HepG2 (cell line): ENCODE measurements at regions of chr4 and their contacts with region 1.

Region 1: DNA sequence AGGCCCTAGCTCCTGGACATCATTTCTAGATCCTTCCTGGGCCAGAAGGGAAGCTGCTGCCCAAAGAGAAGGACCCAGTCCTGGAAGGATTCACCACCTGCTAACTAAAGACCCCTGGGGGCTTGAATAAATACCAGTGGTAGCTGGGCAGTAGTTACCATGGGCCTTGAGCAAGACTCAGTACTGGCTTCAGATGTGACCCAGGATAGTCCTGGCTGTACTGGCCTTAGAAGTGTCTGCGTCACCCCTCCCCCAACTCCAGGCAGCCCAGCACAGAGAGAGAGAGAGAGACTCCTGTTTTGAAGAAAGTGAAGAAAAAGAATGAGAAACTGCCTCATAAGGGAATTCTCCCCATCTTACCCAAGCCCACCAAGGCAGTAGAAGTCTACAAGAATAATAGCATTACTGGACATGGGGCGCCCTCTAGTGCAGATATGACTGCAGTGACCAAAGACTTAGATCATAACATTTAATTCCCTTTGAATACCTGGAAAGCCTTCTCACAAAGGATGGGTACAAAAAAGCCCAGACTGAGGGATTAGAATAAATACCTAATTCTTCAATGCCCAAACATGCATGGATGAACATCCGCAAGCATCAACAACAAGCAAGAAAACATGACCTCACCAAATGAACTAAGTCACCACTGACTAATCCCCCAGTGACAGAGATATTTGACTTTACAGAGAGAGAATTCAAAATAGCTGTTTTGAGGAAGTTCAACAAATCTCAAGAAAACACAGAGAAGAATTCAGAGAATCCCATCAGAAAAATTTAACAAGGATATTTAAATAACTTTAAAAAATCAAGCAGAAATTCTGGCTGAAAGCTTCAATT is 171.8 kb downstream of the HNRNPD start:
- DNase-seq: peak; percentile 49
- ATAC-seq: peak; percentile 90
- H3K4me3 ChIP-seq: no peak overlapping the region
- H3K27ac ChIP-seq: no peak overlapping the region
- H3K4me1 ChIP-seq: no peaks in the 10 kb centered on the region
- H3K27me3 ChIP-seq: no peaks in the 10 kb centered on the region
- CTCF ChIP-seq: peak; percentile 83
- EP300 ChIP-seq: no peak
- POLR2A ChIP-seq: no peak
- RAD21 ChIP-seq: peak; percentile 66; the same call in 1 of the 2 replicates

Region 2: DNA sequence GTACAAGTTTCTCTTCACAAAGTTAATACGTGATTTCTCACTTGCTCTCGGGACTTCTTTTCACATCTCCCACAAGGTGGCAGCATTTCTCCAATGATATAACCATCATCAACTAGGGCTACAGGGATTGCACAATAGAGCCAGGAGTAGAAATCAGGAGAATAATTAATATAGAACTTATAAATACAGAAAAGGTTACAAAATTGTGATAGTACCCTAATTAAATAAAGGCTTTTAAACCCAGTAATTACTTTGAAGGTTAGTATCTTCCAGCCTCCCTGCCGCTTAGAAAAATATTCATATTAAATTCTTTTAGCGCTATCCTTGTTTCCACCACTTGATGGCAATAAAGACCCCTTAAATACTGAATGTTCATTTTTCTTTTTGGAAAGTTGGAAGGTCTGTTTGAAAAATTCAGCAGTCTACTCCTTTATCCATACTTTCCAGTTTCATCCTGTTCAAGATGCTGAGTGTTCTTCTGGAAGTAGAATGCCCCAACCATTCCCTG is 796.1 kb before region 1 on chr4:
- CTCF ChIA-PET with region 1: interaction called, 55 read pairs
- POLR2A ChIA-PET with region 1: no interaction called
- in situ Hi-C with region 1: loop called (anchors 5 kb)
- intact Hi-C with region 1: loop called (anchors 1 kb)
- DNase-seq: peak; percentile 81
- ATAC-seq: peak; percentile 78
- H3K4me3 ChIP-seq: no peak overlapping the region
- H3K27ac ChIP-seq: no peak overlapping the region
- H3K4me1 ChIP-seq: no peaks in the 10 kb centered on the region
- H3K27me3 ChIP-seq: no peaks in the 10 kb centered on the region; a peak in 1 of 5 replicates
- CTCF ChIP-seq: peak; percentile 75
- EP300 ChIP-seq: no peak
- POLR2A ChIP-seq: no peak
- RAD21 ChIP-seq: peak; percentile 62; the same call in 1 of the 2 replicates

Region 3: DNA sequence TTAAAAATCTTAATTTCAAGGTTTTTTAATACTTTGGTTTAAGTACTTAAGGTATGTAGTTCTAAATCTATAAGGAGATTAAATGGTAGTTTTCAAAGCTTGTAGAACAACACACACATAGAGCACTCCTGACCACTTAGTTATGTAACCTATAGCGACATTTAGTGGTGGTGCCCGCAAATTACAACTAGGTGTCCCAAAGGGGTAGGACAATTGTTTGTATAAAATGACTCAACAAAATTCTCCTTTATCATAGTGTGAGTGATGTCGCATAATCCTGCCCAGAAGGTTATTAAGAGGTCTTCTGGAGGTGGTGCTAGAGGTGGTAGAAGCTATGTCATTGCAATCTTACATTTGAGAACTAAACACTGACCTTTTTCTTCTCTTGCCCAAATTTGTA is 357.3 kb before region 1 on chr4:
- CTCF ChIA-PET with region 1: interaction called, 5 read pairs
- POLR2A ChIA-PET with region 1: no interaction called
- in situ Hi-C with region 1: no loop called
- intact Hi-C with region 1: loop called (anchors 1 kb)
- DNase-seq: peak; percentile 70
- ATAC-seq: peak; percentile 93
- H3K4me3 ChIP-seq: no peak overlapping the region
- H3K27ac ChIP-seq: no peak overlapping the region
- H3K4me1 ChIP-seq: no peaks in the 10 kb centered on the region
- H3K27me3 ChIP-seq: no peaks in the 10 kb centered on the region
- CTCF ChIP-seq: peak; percentile 73
- EP300 ChIP-seq: no peak
- POLR2A ChIP-seq: no peak
- RAD21 ChIP-seq: peak; percentile 46; the same call in 1 of the 2 replicates

Region 4: DNA sequence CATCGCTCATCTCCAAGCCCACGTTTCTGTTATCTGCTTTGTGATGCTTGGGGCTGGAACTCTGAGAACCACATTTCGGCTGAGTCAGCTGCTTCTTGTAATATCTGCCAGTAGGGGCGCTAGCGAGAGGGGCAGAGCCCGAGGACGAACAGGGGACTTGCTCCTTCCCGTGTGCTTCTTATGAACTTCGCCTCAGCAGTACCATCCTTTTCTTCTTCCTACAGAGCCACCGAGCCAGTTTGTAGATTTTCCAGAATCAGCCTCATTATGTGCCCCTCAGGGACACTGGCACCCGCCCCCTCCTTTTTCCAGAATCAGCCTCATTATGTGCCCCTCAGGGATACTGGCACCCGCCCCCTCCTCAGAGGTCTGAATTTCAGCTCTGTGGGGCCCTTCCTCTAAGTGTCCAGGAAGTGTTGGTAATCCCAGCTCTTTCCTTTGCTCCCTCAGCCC is 288.6 kb before region 1 on chr4:
- CTCF ChIA-PET with region 1: no interaction called
- POLR2A ChIA-PET with region 1: no interaction called
- in situ Hi-C with region 1: no loop called
- intact Hi-C with region 1: loop called (anchors 10 kb)
- DNase-seq: peak; percentile 48
- ATAC-seq: peak; percentile 82
- H3K4me3 ChIP-seq: no peak overlapping the region
- H3K27ac ChIP-seq: no peak overlapping the region
- H3K4me1 ChIP-seq: no peaks in the 10 kb centered on the region
- H3K27me3 ChIP-seq: no peaks in the 10 kb centered on the region
- CTCF ChIP-seq: peak; percentile 71
- EP300 ChIP-seq: no peak
- POLR2A ChIP-seq: no peak
- RAD21 ChIP-seq: no peak